ENCODE measurements at regions of chr2 and their contacts with region 1.

Region 1: GRCh38 chr2:126776692-126777619 is 121.0 kb downstream of the GYPC start:
- DNase-seq: peak; percentile 60 to 88
- H3K4me3 ChIP-seq: peak overlapping the region; percentile 38
- H3K4me1 ChIP-seq: no peaks in the 10 kb centered on the region
- H3K27me3 ChIP-seq: 0 out of 2 replicates have a peak, but pooled peaks cover 3% of the 10 kb centered on the region

Region 2: DNA sequence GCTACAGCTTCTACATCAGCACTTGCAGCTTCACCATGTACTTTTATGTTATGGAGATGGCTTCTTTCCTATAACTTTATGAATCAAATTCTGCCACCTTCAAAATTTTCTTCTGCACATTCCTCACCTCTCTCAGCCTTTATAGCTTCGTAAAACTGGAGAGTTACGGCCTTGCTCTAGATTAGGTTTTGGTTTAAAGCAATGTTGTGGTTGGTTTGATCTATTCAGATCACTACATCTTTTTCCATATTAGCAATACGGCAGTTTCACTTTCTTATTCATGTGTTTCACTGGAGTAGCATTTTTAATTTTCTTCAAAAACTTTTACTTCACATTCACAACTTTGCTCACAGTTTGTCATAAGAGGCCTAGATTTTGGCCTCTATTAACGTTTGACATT is 363.9 kb before region 1 on chr2:
- in situ Hi-C with region 1: no loop called
- DNase-seq: no peak
- H3K4me3 ChIP-seq: no peak overlapping the region
- H3K4me1 ChIP-seq: no peaks in the 10 kb centered on the region
- H3K27me3 ChIP-seq: no peaks in the 10 kb centered on the region

Region 3: DNA sequence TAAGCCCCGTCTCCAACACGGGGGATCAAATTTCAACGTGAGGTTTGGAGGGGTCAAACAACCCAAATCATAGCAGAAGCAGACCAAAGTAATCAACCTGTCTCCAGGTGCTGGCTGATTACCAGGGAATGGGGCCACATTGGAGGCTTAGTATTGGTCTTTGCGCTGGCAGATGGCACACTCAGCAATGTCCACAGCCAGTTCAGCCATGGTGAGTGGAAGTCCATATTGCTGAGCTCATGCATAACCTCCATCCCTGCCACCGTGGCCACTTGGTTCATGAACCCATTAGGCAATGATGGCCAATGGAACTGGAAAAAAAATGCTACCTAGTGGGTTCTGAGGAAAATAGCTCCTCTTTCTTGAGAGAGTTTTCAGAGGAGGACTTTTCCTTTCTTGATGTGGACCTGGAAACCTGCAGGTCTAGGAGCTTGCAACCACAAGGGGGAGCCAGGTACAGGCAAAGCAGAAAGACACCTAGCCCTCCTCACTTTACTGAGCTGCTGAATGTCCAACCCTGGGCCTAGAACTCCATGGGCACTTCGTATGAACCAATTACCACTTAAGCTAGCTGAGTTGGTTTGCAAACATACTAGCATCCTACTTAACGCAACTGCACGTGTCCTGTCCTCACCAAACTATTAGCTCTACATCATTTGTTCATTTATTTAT is 249.0 kb before region 1 on chr2:
- in situ Hi-C with region 1: loop called (anchors 10 kb)
- DNase-seq: peak; percentile 52 to 76
- H3K4me3 ChIP-seq: no peak overlapping the region
- H3K4me1 ChIP-seq: no peaks in the 10 kb centered on the region
- H3K27me3 ChIP-seq: no peaks in the 10 kb centered on the region

Region 4: GRCh38 chr2:126858013-126858412 is 81.1 kb after region 1 on chr2:
- in situ Hi-C with region 1: no loop called
- DNase-seq: no peak
- H3K4me3 ChIP-seq: no peak overlapping the region
- H3K4me1 ChIP-seq: no peaks in the 10 kb centered on the region
- H3K27me3 ChIP-seq: no peaks in the 10 kb centered on the region

Measured in HAP-1 (cell line).